ENCODE measurements at regions of chr3 and their contacts with region 1.

Region 1: DNA sequence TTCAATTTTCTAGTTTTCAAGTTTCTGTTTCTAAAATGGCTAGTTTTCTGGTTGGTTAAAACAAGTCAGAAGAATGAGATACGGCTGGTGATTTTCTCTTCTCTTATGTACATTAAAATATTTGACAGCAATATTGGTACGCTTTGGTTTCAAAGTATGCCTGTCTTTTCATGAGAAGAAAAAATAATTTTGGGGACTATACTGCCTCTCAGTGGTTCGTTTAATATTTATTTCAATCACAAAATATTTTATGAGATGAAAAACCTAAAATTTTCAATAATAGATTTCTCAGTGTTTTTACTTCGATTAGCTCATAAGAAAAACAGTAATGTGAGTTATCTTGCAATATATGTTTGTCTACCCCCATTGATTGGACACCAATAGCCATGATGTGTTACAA is 72.8 kb upstream of the AADACL2 start:
- DNase-seq: no peak
- H3K4me3 ChIP-seq: no peak overlapping the region
- H3K27ac ChIP-seq: no peak overlapping the region
- H3K4me1 ChIP-seq: no peaks in the 10 kb centered on the region
- H3K27me3 ChIP-seq: no peaks in the 10 kb centered on the region
- CTCF ChIP-seq: no peak
- EP300 ChIP-seq: no peak
- POLR2A ChIP-seq: no peak
- RAD21 ChIP-seq: 0 out of 4 replicates have a peak, but pooled peaks of 1 of the 2 experiments have one; percentile 4

Region 2: GRCh38 chr3:151468284-151468917 is 192.5 kb before region 1 on chr3:
- CTCF ChIA-PET with region 1: interaction called, 13 read pairs
- POLR2A ChIA-PET with region 1: no interaction called
- DNase-seq: peak; percentile 36 to 58
- H3K4me3 ChIP-seq: no peak overlapping the region
- H3K27ac ChIP-seq: no peak overlapping the region
- H3K4me1 ChIP-seq: no peaks in the 10 kb centered on the region
- H3K27me3 ChIP-seq: no peaks in the 10 kb centered on the region
- CTCF ChIP-seq: peak; percentile 36 to 81 (median 68)
- EP300 ChIP-seq: no peak
- POLR2A ChIP-seq: no peak
- RAD21 ChIP-seq: peak; percentile 79 to 83

Region 3: GRCh38 chr3:151568184-151568583 is 92.7 kb before region 1 on chr3:
- CTCF ChIA-PET with region 1: no interaction called
- POLR2A ChIA-PET with region 1: no interaction called
- DNase-seq: no peak
- H3K4me3 ChIP-seq: no peak overlapping the region
- H3K27ac ChIP-seq: no peak overlapping the region
- H3K4me1 ChIP-seq: peaks cover 0 to 8% (median 2%) of the 10 kb centered on the region in 4 experiments; a peak in 3 of 7 replicates
- H3K27me3 ChIP-seq: no peaks in the 10 kb centered on the region
- CTCF ChIP-seq: no peak
- EP300 ChIP-seq: no peak
- POLR2A ChIP-seq: no peak
- RAD21 ChIP-seq: no peak